Ascending aorta (tissue), 2 donors: ENCODE measurements at regions of chr7 and their contacts with region 1.

Region 1: GRCh38 chr7:130205084-130205947 is at the start of gene TMEM209:
- DNase-seq: peak; percentile 83 to 97
- H3K4me3 ChIP-seq: peak within 1 kb of the TSS; percentile 69 to 83
- H3K27ac ChIP-seq: peak within 1 kb of the TSS; percentile 77 to 95
- H3K4me1 ChIP-seq: peaks cover 0 to 5% of the 10 kb centered on the region in 2 donors
- H3K27me3 ChIP-seq: no peaks in the 10 kb centered on the region
- CTCF ChIP-seq: no peak
- total RNA-seq, gene TMEM209: 5.3 TPM

Region 2: DNA sequence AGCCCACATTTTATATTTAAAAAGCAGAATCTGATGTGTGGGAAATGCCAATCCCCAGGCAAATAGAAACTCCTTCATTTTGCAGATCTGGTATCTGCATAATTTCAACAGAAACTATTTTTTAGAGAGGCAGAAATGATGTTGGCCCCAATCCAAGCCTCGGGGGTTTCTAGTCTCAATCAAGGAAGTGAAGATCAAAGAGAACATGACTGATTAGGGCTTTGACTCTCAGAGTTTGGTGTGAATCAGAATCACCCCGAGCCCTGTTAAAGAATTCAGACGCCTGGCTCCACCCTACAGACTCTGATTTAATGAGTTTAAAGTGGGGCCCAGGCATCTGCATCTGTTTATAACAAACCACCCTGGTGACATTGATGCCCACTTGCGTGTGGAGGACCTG is 215.8 kb before region 1 on chr7:
- intact Hi-C with region 1: no loop called
- DNase-seq: no peak
- H3K4me3 ChIP-seq: no peak overlapping the region
- H3K27ac ChIP-seq: no peak overlapping the region
- H3K4me1 ChIP-seq: peaks cover 0 to 6% of the 10 kb centered on the region in 2 donors
- H3K27me3 ChIP-seq: no peaks in the 10 kb centered on the region
- CTCF ChIP-seq: no peak

Region 3: GRCh38 chr7:130141884-130142671 is 63.2 kb before region 1 on chr7:
- intact Hi-C with region 1: loop called (anchors 2 kb)
- DNase-seq: no peak
- H3K4me3 ChIP-seq: peak overlapping the region; percentile 64 to 78
- H3K27ac ChIP-seq: peak overlapping the region; percentile 66 to 78
- H3K4me1 ChIP-seq: peaks cover 0 to 12% of the 10 kb centered on the region in 2 donors
- H3K27me3 ChIP-seq: no peaks in the 10 kb centered on the region
- CTCF ChIP-seq: no peak

Region 4: DNA sequence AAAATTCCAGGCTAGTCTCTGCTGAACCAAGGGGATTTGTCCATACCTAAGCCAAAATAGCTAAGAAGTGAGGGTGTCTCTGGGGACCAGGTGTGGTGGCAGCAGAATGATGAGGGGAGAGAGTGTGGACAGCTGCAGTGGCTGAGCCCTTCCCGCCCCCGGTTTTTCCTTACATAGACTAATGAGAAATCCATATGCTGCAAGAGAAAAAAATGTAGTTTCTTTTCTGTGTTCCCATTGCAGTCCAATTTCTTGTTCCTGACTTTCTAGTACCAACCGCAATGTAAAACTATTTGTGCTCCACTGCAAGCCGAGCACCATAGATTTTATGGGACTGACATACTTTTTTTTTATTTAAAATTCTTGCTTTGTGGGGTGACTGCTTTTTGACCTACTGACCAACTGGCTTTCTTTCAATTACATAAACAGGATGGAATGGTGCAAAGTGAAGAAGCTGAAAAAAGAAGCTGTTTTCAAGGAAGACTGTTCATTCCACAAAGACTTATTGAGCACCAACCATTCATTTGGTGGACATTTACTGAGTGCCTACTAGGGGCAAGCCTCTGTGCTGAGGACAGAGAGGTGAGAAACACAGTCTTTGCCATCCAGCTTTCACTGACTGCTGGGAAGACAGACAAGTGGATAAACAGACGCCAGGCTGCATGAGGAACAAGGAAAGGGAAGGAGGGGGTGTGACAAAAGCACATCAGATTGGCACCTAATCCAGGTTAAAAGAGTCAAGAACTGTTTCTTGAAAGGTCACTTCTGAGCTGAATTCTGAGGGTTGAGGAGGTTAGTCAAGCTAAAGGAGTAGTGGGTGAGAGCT is 225.7 kb after region 1 on chr7:
- intact Hi-C with region 1: no loop called
- DNase-seq: no peak
- H3K4me3 ChIP-seq: peak overlapping the region in 1 of 2 donors; percentile 34
- H3K27ac ChIP-seq: no peak overlapping the region
- H3K4me1 ChIP-seq: no peaks in the 10 kb centered on the region
- H3K27me3 ChIP-seq: no peaks in the 10 kb centered on the region
- CTCF ChIP-seq: no peak

Region 5: GRCh38 chr7:130668257-130669084 is 463.2 kb after region 1 on chr7 and contains the start of gene COPG2:
- intact Hi-C with region 1: loop called (anchors 2 kb)
- DNase-seq: peak; percentile 22 to 88
- H3K4me3 ChIP-seq: peak within 1 kb of the TSS; percentile 83 to 89
- H3K27ac ChIP-seq: peak within 1 kb of the TSS; percentile 68 to 70
- H3K4me1 ChIP-seq: peaks cover 0 to 3% of the 10 kb centered on the region in 2 donors
- H3K27me3 ChIP-seq: no peaks in the 10 kb centered on the region
- CTCF ChIP-seq: no peak
- total RNA-seq, gene COPG2: 5.4 TPM